Left cardiac atrium (tissue), 4 donors: ENCODE measurements at regions of chr1 and their contacts with region 1.

Region 1: DNA sequence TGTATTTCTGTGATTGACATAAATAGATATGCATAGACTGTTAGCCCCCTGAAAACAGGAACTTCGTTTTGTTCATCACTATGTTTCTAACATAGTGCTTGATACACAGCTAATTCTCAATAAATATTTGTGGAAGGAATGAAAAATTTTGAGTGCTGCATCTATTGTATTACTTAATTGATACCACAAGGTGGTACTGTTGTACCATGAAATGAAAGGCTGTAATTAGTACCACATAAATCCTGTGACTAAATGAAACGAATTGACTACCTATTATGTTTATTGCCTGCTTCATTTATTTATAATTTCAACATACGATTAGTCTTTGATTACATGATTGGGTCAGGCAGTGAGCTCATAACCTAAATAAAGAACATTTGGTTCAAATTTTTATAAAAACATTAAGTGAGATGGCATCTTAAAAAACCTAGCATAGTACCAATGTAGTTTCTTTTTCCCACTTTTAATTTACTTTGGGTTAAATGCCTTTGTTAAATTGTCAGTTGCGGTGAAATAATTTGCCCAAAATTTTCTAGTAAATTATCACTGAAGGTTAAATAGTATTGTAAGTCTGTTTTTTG is 15.0 kb upstream of the TGFB2 start:
- DNase-seq: no peak
- ATAC-seq: peak in 1 of 2 donors; percentile 38

Region 2: DNA sequence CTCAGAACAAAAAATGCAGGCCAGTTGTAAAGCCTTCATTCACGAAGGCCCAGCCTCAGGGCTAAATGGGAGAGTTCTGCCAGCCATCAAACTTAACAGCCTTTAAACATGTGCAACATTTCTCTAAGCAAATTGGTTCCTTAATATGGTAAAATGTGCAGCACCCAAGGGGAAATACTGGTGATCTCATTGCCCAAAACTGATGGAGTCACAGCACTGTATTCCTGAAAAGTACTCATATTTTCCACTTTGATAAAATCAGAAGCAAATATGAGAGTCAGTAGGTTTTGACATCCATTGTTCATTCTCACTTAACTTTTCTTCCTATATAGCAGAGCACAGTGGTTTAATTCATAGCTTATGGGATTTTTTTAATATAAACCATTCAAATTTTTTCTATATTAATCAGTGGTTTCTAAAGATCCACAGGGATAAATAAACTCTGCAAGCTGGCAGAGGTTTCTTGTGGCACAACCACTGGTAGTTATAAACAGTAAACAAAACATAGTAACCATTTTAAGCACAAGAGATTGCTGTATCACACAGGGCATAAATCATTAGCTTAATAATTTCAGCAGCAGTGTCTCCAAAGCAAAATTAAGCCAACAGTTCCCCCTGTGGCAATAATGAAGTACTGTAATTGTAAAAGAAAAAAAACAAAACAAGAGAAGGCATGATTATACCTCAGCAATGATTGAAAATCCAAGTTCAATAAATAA is 736.7 kb after region 1 on chr1:
- intact Hi-C with region 1: loop called in 1 of 2 experiments (anchors 5 kb)
- DNase-seq: no peak
- ATAC-seq: peak; percentile 72 to 80

Region 3: GRCh38 chr1:219416594-219417238 is 1086.6 kb after region 1 on chr1:
- intact Hi-C with region 1: loop called in 1 of 2 experiments (anchors 10 kb)
- DNase-seq: peak; percentile 45
- ATAC-seq: peak; percentile 23 to 71

Region 4: DNA sequence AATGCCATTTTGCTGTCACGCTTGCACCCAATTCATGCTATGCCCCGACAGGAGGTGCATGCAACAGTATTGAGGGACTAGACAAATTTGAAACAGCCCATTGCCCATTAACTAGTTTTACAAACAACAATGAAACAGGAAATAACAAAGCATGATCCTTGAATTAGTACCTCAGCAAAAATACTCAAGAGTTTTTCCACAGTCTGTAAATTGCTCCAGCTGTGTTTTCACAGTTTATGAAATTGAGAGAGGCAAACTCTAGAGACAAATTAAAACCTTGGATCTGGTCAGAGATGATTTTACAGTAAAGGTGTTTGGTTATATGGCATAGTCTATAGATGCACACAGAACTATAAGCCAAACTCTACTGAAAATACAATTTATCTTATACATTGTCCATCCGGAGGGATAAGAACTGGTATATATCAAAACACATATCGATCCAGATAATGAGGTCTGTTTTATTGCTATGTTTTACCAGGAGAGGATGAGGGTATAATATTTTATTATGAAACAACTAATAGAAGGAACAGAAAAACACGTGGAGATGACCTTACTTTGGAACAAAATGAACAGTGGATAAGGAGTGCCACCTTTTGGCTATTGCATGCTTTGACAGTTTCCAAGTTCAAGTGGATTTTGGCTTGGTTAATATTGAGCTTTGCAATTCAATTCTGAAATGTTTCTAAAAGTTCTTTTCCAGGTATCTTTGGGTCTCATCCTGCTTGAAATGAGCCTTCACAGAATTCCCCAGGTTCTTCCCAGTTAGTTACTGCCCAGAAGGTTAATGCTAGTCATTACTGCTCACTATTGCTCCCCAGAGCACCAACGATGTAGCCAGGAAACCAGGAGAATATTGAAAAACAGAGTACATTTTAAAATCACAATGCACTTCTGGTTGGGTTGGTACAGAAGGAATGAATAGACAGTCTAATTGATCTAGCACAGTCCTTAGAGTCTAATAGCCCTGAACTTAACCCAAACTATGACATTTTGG is 1237.1 kb after region 1 on chr1:
- intact Hi-C with region 1: loop called in 1 of 2 experiments (anchors 10 kb)
- DNase-seq: no peak
- ATAC-seq: peak; percentile 42 to 53

Region 5: GRCh38 chr1:219660666-219661463 is 1330.7 kb after region 1 on chr1:
- intact Hi-C with region 1: loop called in 1 of 2 experiments (anchors 10 kb)
- DNase-seq: peak; percentile 92
- ATAC-seq: peak; percentile 92 to 95